Activated CD8-positive, alpha-beta T cell treated with anti-CD3 and anti-CD28 coated beads, Interleukin-2, amount 10 ng/mL, durations not matched to agents 7 days and 5 days (primary cell): ENCODE measurements at regions of chr2 and their contacts with region 1.

Region 1: DNA sequence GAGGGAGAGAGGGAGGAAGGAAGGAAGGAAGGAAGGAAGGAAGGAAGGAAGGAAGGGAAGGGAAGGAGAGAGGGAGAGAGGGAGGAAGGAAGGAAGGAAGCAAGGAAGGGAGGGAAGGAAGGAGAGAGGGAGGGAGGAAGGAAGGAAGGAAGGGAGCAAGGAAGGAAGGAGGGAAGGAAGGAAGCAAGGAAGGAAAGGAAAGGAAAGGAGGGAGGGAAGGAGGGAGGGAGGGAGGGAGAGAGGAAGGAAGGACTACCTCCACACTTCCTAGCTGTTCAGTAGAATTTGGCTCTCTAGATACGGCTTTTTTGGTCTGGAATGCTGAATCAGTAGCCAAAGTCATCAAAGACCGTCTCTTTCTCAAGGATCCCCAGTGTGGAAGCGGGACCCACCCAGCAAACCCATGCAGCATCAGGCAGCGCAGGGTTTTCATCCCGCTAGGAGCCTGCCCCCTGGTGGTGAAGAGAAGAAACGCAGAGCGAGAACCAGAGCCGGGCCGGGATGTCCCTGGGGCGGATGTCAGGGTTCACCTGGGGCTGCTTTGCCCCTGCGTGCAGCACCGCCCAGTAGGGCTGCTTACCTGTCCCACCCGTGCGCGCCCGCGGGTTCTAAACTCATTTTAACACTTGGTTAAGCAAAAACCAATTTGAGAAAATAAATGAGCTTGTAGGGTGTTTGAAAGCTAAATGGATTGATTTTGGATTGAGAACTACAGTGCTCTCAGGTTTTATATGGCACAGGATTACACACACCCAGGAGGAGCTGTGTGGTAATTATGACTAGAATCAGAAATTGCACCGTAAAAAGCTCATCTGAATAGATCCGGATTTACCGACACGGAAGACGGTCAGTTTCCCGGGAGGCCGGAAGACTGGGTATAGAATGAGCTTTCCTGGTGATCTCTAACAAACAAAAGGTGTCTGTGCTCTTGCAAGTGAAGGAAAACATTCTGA is 48.1 kb upstream of the ARL4C start:
- DNase-seq: peak; percentile 85
- ATAC-seq: peak; percentile 93
- H3K4me3 Mint-ChIP-seq: no peak overlapping the region
- H3K27ac Mint-ChIP-seq: no peak overlapping the region
- H3K4me1 Mint-ChIP-seq: peaks cover 6% of the 10 kb centered on the region
- H3K27me3 Mint-ChIP-seq: peaks cover 18% of the 10 kb centered on the region

Region 2: GRCh38 chr2:233990261-233990798 is 554.6 kb before region 1 on chr2:
- CTCF ChIA-PET with region 1: interaction called, 11 read pairs
- POLR2A ChIA-PET with region 1: no interaction called
- DNase-seq: peak; percentile 91
- ATAC-seq: peak; percentile 91
- H3K4me3 Mint-ChIP-seq: peak overlapping the region; percentile 1
- H3K27ac Mint-ChIP-seq: peak overlapping the region; percentile 39
- H3K4me1 Mint-ChIP-seq: peaks cover 57% of the 10 kb centered on the region
- H3K27me3 Mint-ChIP-seq: no peaks in the 10 kb centered on the region

Region 3: GRCh38 chr2:234135720-234136221 is 409.2 kb before region 1 on chr2:
- CTCF ChIA-PET with region 1: interaction called, 13 read pairs
- POLR2A ChIA-PET with region 1: no interaction called
- DNase-seq: peak; percentile 72
- ATAC-seq: peak; percentile 84
- H3K4me3 Mint-ChIP-seq: no peak overlapping the region
- H3K27ac Mint-ChIP-seq: no peak overlapping the region
- H3K4me1 Mint-ChIP-seq: peaks cover 22% of the 10 kb centered on the region
- H3K27me3 Mint-ChIP-seq: peaks cover 16% of the 10 kb centered on the region

Region 4: GRCh38 chr2:234555720-234556119 is 10.8 kb after region 1 on chr2:
- CTCF ChIA-PET with region 1: interaction called, 15 read pairs
- POLR2A ChIA-PET with region 1: no interaction called
- DNase-seq: peak; percentile 54
- ATAC-seq: no peak
- H3K4me3 Mint-ChIP-seq: no peak overlapping the region
- H3K27ac Mint-ChIP-seq: no peak overlapping the region
- H3K4me1 Mint-ChIP-seq: peaks cover 12% of the 10 kb centered on the region
- H3K27me3 Mint-ChIP-seq: peaks cover 8% of the 10 kb centered on the region

Region 5: GRCh38 chr2:234583331-234583730 is 38.4 kb after region 1 on chr2:
- CTCF ChIA-PET with region 1: no interaction called
- POLR2A ChIA-PET with region 1: no interaction called
- DNase-seq: no peak
- ATAC-seq: no peak
- H3K4me3 Mint-ChIP-seq: no peak overlapping the region
- H3K27ac Mint-ChIP-seq: no peak overlapping the region
- H3K4me1 Mint-ChIP-seq: no peaks in the 10 kb centered on the region
- H3K27me3 Mint-ChIP-seq: peaks cover 6% of the 10 kb centered on the region

Region 6: DNA sequence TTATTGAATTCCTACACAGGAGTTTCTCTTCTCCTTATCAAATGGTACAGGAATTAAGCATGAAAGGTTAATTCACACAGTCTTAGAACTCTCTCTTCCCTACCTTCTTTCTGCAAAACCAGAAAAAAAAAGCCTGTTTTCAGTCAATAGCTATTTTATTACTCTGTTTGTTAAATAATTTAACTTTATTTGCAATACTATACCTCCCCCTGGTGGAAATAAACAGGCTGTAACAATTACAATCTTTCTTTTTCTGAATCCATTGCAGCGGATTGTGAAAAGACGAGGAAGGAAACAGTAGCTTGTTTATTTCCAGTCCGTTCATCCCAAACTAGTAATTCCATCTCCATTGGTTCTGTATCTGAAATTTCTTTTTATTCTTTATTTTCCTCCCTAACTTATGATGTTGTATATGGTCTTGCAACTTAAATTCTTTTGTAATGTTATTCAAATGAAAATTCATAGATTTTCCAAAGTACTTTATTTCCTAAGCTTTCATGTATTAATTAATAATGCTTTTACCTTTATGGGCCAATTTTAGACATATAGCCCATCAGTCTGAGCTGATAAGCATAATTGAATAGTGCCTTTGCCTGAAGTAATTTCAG is 572.1 kb after region 1 on chr2:
- CTCF ChIA-PET with region 1: interaction called, 10 read pairs
- POLR2A ChIA-PET with region 1: no interaction called
- DNase-seq: no peak
- ATAC-seq: no peak
- H3K4me3 Mint-ChIP-seq: no peak overlapping the region
- H3K27ac Mint-ChIP-seq: no peak overlapping the region
- H3K4me1 Mint-ChIP-seq: no peaks in the 10 kb centered on the region
- H3K27me3 Mint-ChIP-seq: peaks cover 6% of the 10 kb centered on the region